ENCODE measurements at regions of chr11 and their contacts with region 1.

Region 1: DNA sequence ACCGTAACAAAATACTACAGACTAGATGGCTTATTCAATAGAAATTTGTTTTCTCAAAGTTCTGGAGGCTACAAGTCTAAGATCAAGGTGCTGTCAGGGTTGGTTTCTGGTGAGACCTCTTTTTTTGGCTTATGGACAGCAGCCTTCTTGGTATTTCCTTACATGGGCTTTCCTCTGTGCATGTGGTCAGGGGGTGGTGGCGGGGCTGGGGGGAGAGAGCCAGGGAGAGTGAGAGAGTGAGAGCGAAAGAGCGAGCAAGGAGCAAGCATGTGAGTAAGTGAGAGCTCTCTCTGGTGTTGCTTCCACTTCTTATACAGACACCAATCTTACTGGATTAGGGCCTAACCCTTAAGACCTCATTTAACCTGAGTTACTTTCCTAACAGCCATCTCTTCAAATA is 181.5 kb downstream of the TMEM135 start:
- H3K4me3 Mint-ChIP-seq: no peak overlapping the region
- H3K27ac Mint-ChIP-seq: no peak overlapping the region
- H3K4me1 Mint-ChIP-seq: peaks cover 7% of the 10 kb centered on the region
- H3K27me3 Mint-ChIP-seq: no peaks in the 10 kb centered on the region

Region 2: GRCh38 chr11:87203907-87204602 is 15.2 kb before region 1 on chr11:
- intact Hi-C with region 1: loop called (anchors 1 kb)
- H3K4me3 Mint-ChIP-seq: no peak overlapping the region
- H3K27ac Mint-ChIP-seq: no peak overlapping the region
- H3K4me1 Mint-ChIP-seq: peaks cover 10% of the 10 kb centered on the region
- H3K27me3 Mint-ChIP-seq: no peaks in the 10 kb centered on the region